GM13977 (cell line): ENCODE measurements at regions of chr17 and their contacts with region 1.

Region 1: GRCh38 chr17:62703775-62704378 is 76.4 kb downstream of the MRC2 start:
- DNase-seq: peak; percentile 82
- CTCF ChIP-seq: peak; percentile 98

Region 2: DNA sequence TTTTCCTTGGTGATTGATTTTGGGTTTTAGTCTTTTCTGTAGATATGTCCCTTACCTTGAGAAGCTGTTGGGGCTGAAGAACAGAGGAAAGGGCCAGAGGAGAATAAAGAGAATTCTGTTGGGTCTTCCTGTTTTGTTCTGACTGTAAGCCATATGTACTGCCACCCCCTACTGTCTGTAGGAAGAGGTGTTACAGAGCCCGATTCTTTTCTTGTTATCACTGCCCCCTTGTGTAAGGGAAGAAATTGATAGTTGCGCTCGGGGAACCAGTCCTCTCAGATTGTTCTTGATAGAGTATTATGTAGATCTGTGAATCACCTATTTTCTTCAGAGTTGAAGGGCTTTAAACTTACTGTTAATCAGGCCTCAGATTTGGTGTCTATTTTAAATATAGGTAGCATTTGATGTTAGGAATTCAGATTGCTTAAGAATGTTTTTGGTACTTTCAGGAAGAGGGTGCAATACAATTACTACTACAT is 264.6 kb after region 1 on chr17:
- in situ Hi-C with region 1: loop called (anchors 25 kb)
- DNase-seq: peak; percentile 88
- CTCF ChIP-seq: peak; percentile 76

Region 3: GRCh38 chr17:63406689-63407330 is 702.9 kb after region 1 on chr17:
- in situ Hi-C with region 1: loop called (anchors 25 kb)
- DNase-seq: peak; percentile 75
- CTCF ChIP-seq: peak; percentile 84